Naive thymus-derived CD4-positive, alpha-beta T cell (primary cell): ENCODE measurements at regions of chr17 and their contacts with region 1.

Region 1: DNA sequence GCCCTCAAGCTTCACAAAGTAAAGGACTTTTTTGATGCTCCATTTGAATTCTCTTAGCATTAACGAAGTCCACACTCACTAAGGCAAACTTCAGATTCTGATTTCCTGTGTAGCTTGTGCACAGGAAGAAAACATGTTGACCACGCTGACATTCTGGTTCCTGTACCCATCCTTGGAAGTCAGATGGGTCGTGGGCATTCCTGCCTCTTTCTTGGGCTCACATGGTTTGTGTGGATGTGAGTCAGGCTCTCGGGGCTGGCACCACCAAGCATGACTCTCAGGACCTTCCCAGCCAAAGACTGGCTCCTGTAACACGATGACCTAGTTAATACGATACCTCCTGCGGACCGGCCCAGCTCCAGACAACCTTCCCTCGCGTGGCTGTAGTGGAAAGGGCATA is 32.8 kb downstream of the ARSG start:
- DNase-seq: no peak
- ATAC-seq: no peak
- H3K4me3 ChIP-seq: no peak overlapping the region
- H3K4me3 Mint-ChIP-seq: peak overlapping the region in 4 of 10 donors; percentile 13 to 40 (median 26)
- H3K27ac ChIP-seq: no peak overlapping the region
- H3K27ac Mint-ChIP-seq: peak overlapping the region in 2 of 9 donors; percentile 28 to 40
- H3K4me1 ChIP-seq: peaks cover 7 to 8% of the 10 kb centered on the region in 2 donors
- H3K4me1 Mint-ChIP-seq: peaks cover 7 to 45% (median 19%) of the 10 kb centered on the region in 7 donors
- H3K27me3 ChIP-seq: no peaks in the 10 kb centered on the region
- H3K27me3 Mint-ChIP-seq: no peaks in the 10 kb centered on the region

Region 2: GRCh38 chr17:66415366-66416206 is 1908.5 kb before region 1 on chr17:
- CTCF ChIA-PET with region 1: no interaction called
- POLR2A ChIA-PET with region 1: interaction called, 10 read pairs
- intact Hi-C with region 1: no loop called
- DNase-seq: peak in 1 of 9 donors; percentile 29
- ATAC-seq: no peak
- H3K4me3 ChIP-seq: peak overlapping the region; percentile 2
- H3K4me3 Mint-ChIP-seq: peak overlapping the region; percentile 20 to 80 (median 74)
- H3K27ac ChIP-seq: no peak overlapping the region
- H3K27ac Mint-ChIP-seq: peak overlapping the region; percentile 28 to 94 (median 72)
- H3K4me1 ChIP-seq: peaks cover 0 to 54% of the 10 kb centered on the region in 2 donors
- H3K4me1 Mint-ChIP-seq: peaks cover 27 to 87% (median 70%) of the 10 kb centered on the region in 7 donors
- H3K27me3 ChIP-seq: no peaks in the 10 kb centered on the region
- H3K27me3 Mint-ChIP-seq: no peaks in the 10 kb centered on the region